Calu3 (cell line): ENCODE measurements at regions of chr12 and their contacts with region 1.

Region 1: DNA sequence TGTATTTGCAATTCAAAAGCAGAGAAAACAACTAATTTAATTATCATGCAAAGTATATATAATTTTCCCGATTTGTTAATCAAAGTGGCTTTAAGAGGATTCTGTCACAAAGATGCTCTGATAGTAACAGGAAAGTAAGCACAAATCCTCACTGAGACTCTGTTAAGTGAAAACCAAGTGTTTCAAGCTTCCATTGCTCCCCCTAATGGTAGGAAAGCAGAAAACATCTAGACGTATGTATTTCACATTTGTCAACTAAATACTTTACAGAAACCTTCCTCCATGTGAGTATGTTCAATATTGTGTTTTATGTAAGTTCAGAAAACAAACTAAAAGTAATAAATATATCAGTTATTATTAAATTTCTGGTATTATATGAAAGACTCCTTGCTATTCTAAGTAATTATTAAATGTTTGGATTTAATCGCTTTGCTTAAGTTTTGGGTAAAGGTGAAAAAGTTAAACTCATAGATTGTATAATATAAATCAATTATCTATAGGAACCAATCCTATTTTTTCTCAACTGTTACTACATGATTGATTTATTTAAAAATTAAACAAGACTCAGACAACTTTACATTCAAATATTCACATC is 1.5 kb upstream of the NTS start:
- DNase-seq: peak; percentile 16
- H3K4me3 Mint-ChIP-seq: no peak overlapping the region
- H3K27ac Mint-ChIP-seq: no peak overlapping the region
- H3K4me1 Mint-ChIP-seq: peaks cover 13% of the 10 kb centered on the region
- H3K27me3 Mint-ChIP-seq: no peaks in the 10 kb centered on the region
- CTCF ChIP-seq: peak; percentile 52

Region 2: GRCh38 chr12:85688837-85689236 is 183.8 kb before region 1 on chr12:
- CTCF ChIA-PET with region 1: interaction called, 3 read pairs
- intact Hi-C with region 1: loop called (anchors 5 kb)
- DNase-seq: peak; percentile 32
- H3K4me3 Mint-ChIP-seq: no peak overlapping the region
- H3K27ac Mint-ChIP-seq: peak overlapping the region; percentile 56
- H3K4me1 Mint-ChIP-seq: peaks cover 34% of the 10 kb centered on the region
- H3K27me3 Mint-ChIP-seq: no peaks in the 10 kb centered on the region
- CTCF ChIP-seq: no peak

Region 3: GRCh38 chr12:85849344-85849743 is 23.2 kb before region 1 on chr12:
- CTCF ChIA-PET with region 1: no interaction called
- intact Hi-C with region 1: no loop called
- DNase-seq: no peak
- H3K4me3 Mint-ChIP-seq: no peak overlapping the region
- H3K27ac Mint-ChIP-seq: no peak overlapping the region
- H3K4me1 Mint-ChIP-seq: no peaks in the 10 kb centered on the region
- H3K27me3 Mint-ChIP-seq: no peaks in the 10 kb centered on the region
- CTCF ChIP-seq: no peak